ENCODE measurements at regions of chr14 and their contacts with region 1.

Region 1: DNA sequence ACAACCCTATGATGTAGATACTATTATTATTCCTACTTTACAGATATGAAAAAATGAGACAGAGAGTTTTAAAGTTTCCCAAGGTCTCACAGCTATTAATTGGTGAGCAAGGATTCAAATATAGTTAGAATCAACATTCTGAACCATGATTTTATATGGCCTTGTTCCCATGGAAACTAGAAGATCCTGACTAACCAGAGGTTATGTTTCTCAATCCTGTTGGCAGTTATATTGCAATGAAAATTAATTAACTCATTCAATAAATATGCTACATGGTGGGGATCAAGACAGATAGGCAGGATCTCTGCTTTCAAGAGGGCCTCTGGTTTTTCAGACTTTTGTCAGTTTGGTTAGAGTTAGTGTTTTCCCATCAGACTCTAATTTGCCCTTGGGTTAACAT is 9.3 kb upstream of the FUT8 start:
- DNase-seq: no peak
- ATAC-seq: no peak
- H3K4me3 ChIP-seq: no peak overlapping the region
- H3K27ac ChIP-seq: no peak overlapping the region
- H3K4me1 ChIP-seq: no peaks in the 10 kb centered on the region
- H3K27me3 ChIP-seq: no peaks in the 10 kb centered on the region

Region 2: GRCh38 chr14:65222440-65222858 is 180.8 kb before region 1 on chr14:
- intact Hi-C with region 1: loop called in 1 of 4 experiments (anchors 10 kb)
- DNase-seq: peak in 2 of 3 donors; percentile 53 to 79
- ATAC-seq: peak; percentile 78 to 82
- H3K4me3 ChIP-seq: no peak overlapping the region
- H3K27ac ChIP-seq: no peak overlapping the region
- H3K4me1 ChIP-seq: peaks cover 4% of the 10 kb centered on the region
- H3K27me3 ChIP-seq: no peaks in the 10 kb centered on the region